Activated naive CD4-positive, alpha-beta T cell treated with anti-CD3 and anti-CD28 coated beads for 36 hours (primary cell): ENCODE measurements at regions of chr11 and their contacts with region 1.

Region 1: GRCh38 chr11:10307442-10308207 is 2.8 kb downstream of the ADM start:
- DNase-seq: peak; percentile 87
- H3K4me3 Mint-ChIP-seq: peak overlapping the region; percentile 81
- H3K27ac Mint-ChIP-seq: peak overlapping the region; percentile 59
- H3K4me1 Mint-ChIP-seq: peaks cover 33% of the 10 kb centered on the region
- H3K27me3 Mint-ChIP-seq: peaks cover 41% of the 10 kb centered on the region

Region 2: GRCh38 chr11:9363954-9364912 is 943.4 kb before region 1 on chr11:
- CTCF ChIA-PET with region 1: no interaction called
- intact Hi-C with region 1: loop called (anchors 10 kb)
- DNase-seq: peak; percentile 91
- H3K4me3 Mint-ChIP-seq: peak overlapping the region; percentile 66
- H3K27ac Mint-ChIP-seq: peak overlapping the region; percentile 73
- H3K4me1 Mint-ChIP-seq: peaks cover 35% of the 10 kb centered on the region
- H3K27me3 Mint-ChIP-seq: no peaks in the 10 kb centered on the region

Region 3: DNA sequence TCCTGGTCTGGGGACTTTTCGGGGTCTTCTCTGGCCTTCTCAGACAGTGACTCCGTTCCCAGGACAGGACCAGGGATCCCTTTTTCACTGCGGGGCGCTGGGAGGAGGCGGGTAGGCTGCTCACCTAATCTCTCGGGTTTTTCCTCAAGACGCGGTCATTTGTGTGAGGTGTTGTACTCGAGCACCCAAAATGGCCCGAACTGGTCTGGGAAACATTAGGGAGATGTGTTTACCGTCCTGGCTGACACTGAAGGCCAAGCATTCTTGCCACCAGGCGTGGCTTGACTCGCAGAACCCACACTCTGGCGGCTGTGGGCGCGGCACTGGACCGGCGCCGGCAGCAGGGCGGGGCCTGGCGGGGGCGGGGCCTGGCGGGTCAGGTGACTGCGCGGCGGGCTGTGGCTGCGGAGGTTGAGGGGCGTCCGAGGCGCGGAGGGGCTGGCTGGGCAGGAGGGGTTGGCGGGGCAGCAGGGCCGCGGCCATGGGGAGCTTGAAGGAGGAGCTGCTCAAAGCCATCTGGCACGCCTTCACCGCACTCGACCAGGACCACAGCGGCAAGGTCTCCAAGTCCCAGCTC is 643.8 kb before region 1 on chr11 and contains the start of gene SWAP70:
- CTCF ChIA-PET with region 1: no interaction called
- intact Hi-C with region 1: loop called (anchors 5 kb)
- DNase-seq: peak; percentile 72
- H3K4me3 Mint-ChIP-seq: peak within 1 kb of the TSS; percentile 85
- H3K27ac Mint-ChIP-seq: peak within 1 kb of the TSS; percentile 53
- H3K4me1 Mint-ChIP-seq: peaks cover 17% of the 10 kb centered on the region
- H3K27me3 Mint-ChIP-seq: peaks cover 35% of the 10 kb centered on the region
- total RNA-seq, gene SWAP70: 8.2 to 9.5 TPM

Region 4: DNA sequence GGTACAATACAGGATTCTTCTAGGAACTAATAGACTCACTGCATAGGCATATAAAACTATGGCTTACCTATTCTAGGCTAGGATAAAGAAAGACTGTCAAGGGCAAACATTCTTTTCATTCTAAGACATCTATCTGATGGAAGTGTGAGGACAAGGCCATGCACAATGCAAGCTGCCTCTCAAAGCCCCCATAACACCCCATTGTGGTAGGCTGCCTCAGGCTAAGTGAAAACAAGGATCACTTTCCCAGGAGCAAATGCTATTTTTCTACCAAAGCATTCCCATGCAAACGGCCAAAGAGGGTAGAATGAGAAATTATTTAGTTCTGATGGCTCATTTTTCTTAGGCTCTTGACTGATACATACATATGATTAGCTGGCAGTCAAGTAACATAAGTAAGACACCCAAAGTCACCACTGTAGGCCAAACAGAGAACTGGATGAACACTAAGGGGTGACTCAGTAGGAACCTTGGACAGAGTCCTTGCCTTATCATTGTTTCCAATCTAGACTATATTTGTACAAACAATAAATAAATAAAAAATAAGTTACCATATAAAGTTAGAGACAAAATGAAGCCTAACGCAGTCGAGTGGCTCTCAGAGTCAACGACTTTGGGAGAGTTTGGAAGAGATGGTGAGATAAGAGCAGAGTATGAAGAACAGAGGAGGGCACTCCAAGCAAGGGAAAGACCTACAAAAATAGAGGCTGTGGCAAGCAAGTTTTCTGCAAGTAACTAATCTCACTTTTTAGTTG is 317.2 kb before region 1 on chr11:
- CTCF ChIA-PET with region 1: interaction called, 3 read pairs
- intact Hi-C with region 1: loop called (anchors 1 kb)
- DNase-seq: no peak
- H3K4me3 Mint-ChIP-seq: no peak overlapping the region
- H3K27ac Mint-ChIP-seq: no peak overlapping the region
- H3K4me1 Mint-ChIP-seq: peaks cover 3% of the 10 kb centered on the region
- H3K27me3 Mint-ChIP-seq: no peaks in the 10 kb centered on the region

Region 5: DNA sequence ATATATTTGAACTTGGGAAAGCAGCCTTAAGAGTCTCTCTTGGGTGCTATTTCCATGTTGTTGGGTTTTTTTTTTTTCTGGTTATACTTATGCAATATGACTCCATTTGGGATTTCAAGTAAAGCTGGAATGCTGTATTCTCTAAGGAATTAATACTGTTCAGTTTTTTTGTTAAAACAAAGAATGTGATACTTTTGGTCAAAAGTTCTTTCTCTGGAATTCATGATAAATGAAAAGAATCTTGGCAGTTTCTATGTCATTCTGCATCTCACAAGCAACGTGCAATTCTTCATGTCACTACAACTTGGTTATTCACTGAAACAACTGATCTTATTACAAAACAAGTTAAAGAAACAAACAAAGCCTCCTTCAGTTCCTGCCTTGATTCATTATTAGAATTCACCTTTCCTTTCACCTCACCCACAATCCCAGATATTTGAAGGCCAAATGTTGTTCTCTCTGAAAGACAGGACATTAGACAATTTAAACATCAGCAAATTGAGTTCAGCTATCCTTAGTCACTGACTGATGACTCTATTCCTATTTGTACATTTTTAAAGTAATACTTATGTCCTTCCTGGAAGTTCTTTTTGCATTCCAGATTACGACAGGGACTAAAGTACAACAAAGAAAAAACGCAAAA is 189.8 kb before region 1 on chr11:
- CTCF ChIA-PET with region 1: no interaction called
- intact Hi-C with region 1: no loop called
- DNase-seq: no peak
- H3K4me3 Mint-ChIP-seq: no peak overlapping the region
- H3K27ac Mint-ChIP-seq: no peak overlapping the region
- H3K4me1 Mint-ChIP-seq: peaks cover under 1% of the 10 kb centered on the region
- H3K27me3 Mint-ChIP-seq: no peaks in the 10 kb centered on the region

Region 6: DNA sequence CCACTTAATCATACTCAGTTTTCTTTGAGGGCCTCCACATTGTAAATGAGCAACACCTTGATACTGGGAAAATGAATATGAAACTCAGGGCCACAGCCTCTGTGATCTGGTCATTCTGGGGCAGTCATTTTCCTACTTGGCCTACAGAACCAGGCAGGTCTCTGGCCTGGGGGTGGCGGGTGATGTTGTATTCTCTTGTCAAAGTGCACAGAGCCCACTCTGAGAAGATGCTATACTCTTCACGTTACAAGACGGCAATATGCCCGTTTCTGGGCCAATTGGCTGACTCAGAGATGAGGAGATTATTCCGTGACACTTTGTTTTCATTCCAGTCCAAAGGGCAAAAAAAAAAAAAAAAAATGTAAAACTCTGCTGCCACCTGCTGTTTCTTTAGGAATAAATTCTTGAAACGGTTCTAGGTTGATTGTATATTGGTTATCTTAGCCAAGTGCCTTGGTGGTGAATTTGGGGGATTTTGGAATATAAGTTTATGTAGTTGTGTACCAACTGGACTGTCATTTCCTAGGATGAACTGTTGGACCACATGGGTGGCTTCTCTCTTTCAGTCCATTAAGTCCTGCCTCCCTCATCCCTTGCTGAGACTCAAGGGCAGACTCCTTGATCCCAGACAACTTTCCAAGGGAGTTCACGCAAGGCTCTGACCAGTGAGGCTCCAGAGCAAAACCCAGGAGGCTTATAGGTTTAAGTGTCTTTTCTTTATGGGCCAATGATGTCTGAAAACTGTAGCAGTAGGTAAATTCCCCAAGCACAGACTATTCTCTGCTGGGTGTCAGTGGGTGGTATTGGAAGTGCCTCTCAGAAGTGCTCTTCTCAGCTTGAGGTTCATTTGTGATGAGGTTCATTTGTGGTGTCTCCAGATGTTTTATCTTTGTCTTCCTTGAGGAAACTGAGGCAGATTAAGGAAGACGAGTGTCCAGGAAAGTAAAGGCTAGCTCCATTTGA is 15.5 kb after region 1 on chr11:
- CTCF ChIA-PET with region 1: interaction called, 27 read pairs
- intact Hi-C with region 1: loop called (anchors 1 kb)
- DNase-seq: peak; percentile 69
- H3K4me3 Mint-ChIP-seq: peak overlapping the region; percentile 38
- H3K27ac Mint-ChIP-seq: peak overlapping the region; percentile 69
- H3K4me1 Mint-ChIP-seq: peaks cover 12% of the 10 kb centered on the region
- H3K27me3 Mint-ChIP-seq: no peaks in the 10 kb centered on the region

Region 7: GRCh38 chr11:10653926-10654810 is 346.5 kb after region 1 on chr11:
- CTCF ChIA-PET with region 1: no interaction called
- intact Hi-C with region 1: loop called (anchors 5 kb)
- DNase-seq: peak; percentile 48
- H3K4me3 Mint-ChIP-seq: no peak overlapping the region
- H3K27ac Mint-ChIP-seq: no peak overlapping the region
- H3K4me1 Mint-ChIP-seq: peaks cover 5% of the 10 kb centered on the region
- H3K27me3 Mint-ChIP-seq: no peaks in the 10 kb centered on the region